Activated CD4-positive, alpha-beta T cell treated with anti-CD3 and anti-CD28 coated beads for 36 hours (primary cell): ENCODE measurements at regions of chr7 and their contacts with region 1.

Region 1: GRCh38 chr7:552868-553635 is 33.4 kb upstream of the PDGFA start:
- DNase-seq: no peak
- ATAC-seq: no peak
- H3K4me3 Mint-ChIP-seq: no peak overlapping the region
- H3K27ac Mint-ChIP-seq: no peak overlapping the region
- H3K4me1 Mint-ChIP-seq: no peaks in the 10 kb centered on the region
- H3K27me3 Mint-ChIP-seq: no peaks in the 10 kb centered on the region

Region 2: DNA sequence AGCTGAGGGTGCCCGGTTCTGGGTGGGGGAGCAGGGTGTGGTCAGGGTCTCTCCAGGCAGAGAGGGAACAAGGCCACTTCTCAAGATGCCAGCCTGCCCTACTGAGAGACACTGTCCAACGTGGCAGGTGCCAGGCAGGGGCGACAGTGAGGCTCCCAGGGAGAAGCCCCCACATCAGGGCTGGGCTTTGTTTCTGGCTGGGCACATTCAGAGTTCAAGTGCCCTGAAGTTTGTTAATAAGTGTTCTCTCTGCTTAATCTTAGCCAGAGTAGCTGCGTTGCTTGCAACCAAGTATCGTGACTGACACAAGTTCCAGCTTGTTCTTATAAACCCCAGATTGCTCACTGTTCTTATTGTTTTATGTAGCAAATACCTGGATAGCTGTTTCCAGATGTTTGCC is 241.3 kb before region 1 on chr7:
- CTCF ChIA-PET with region 1: no interaction called
- POLR2A ChIA-PET with region 1: no interaction called
- intact Hi-C with region 1: no loop called
- DNase-seq: no peak
- ATAC-seq: no peak
- H3K4me3 Mint-ChIP-seq: no peak overlapping the region
- H3K27ac Mint-ChIP-seq: no peak overlapping the region
- H3K4me1 Mint-ChIP-seq: no peaks in the 10 kb centered on the region
- H3K27me3 Mint-ChIP-seq: peaks cover 17% of the 10 kb centered on the region

Region 3: DNA sequence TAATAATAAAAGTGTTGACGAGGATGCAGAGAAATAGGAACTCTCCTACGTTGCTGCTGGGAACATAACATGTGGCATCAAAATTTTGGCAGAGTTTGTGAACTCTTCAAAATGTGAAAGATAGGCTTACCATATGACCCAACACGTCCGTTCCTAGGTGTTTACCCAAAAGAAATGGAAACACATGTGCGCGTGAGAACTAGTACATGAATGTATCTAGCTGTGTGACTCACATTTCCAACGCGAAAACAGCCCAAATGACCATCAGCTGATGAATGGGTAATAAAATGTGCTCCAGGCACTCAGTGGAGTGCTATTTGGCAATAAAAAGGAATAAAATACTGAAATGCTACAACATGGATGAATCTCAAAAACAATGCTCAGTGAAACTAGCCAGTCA is 1106.6 kb after region 1 on chr7:
- CTCF ChIA-PET with region 1: no interaction called
- POLR2A ChIA-PET with region 1: no interaction called
- intact Hi-C with region 1: loop called in 1 of 2 experiments (anchors 5 kb)
- DNase-seq: no peak
- ATAC-seq: no peak
- H3K4me3 Mint-ChIP-seq: no peak overlapping the region
- H3K27ac Mint-ChIP-seq: no peak overlapping the region
- H3K4me1 Mint-ChIP-seq: peaks cover 2% of the 10 kb centered on the region
- H3K27me3 Mint-ChIP-seq: peaks cover 24% of the 10 kb centered on the region